ENCODE measurements at regions of chr16 and their contacts with region 1.

Region 1: GRCh38 chr16:22077700-22078313 is 14.5 kb upstream of the VWA3A start:
- DNase-seq: peak; percentile 46 to 74 (median 62)
- H3K4me3 ChIP-seq: no peak overlapping the region
- H3K4me3 Mint-ChIP-seq: no peak overlapping the region
- H3K27ac ChIP-seq: no peak overlapping the region
- H3K27ac Mint-ChIP-seq: peak overlapping the region in 2 of 8 donors; percentile 50 to 63
- H3K4me1 ChIP-seq: no peaks in the 10 kb centered on the region
- H3K4me1 Mint-ChIP-seq: peaks cover 3 to 6% (median 5%) of the 10 kb centered on the region in 3 donors
- H3K27me3 ChIP-seq: no peaks in the 10 kb centered on the region
- H3K27me3 Mint-ChIP-seq: no peaks in the 10 kb centered on the region

Region 2: DNA sequence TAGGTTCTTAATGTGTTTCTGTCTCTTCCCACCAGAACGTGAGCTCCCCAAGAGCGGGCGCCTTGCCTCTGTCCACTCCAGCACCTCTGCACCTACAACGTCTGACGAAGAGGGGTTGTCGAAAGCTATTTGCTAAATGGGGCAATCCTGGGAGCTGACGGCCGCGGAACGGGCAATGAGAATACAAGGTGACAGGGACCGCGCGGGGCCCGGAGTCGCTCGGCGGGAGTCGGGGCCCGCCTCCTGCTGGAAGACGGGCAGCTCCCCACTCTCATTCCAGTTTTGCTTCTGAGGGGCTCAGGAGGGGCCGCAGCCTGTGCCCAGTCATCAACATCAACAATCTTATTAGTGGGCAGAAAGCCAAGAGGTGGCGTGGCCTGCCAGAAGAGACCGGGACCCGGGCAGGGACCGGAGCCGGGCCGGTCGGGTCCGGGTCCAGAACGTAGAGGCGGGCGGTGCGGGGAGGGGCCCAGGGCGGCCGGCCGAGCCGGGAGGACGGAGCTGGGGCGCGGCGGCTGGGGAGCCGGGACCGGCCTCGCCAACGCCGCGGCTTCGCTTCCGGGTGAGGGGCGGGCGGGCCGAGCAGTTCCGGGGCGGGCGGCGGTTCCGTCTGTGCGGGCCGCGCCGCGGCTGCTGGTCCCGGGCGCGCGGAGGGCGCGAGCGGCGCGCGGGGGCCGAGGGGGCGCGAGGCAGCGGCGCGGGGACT is 70.1 kb before region 1 on chr16 and contains the start of gene MOSMO:
- CTCF ChIA-PET with region 1: interaction called, 57 read pairs
- POLR2A ChIA-PET with region 1: interaction called, 3 read pairs
- DNase-seq: peak; percentile 59 to 71 (median 63)
- H3K4me3 ChIP-seq: peak within 1 kb of the TSS; percentile 36
- H3K4me3 Mint-ChIP-seq: peak within 1 kb of the TSS; percentile 85 to 96 (median 88)
- H3K27ac ChIP-seq: peak within 1 kb of the TSS; percentile 49
- H3K27ac Mint-ChIP-seq: peak within 1 kb of the TSS; percentile 62 to 96 (median 88)
- H3K4me1 ChIP-seq: peaks cover 15% of the 10 kb centered on the region
- H3K4me1 Mint-ChIP-seq: peaks cover 42 to 54% (median 54%) of the 10 kb centered on the region in 3 donors
- H3K27me3 ChIP-seq: no peaks in the 10 kb centered on the region
- H3K27me3 Mint-ChIP-seq: no peaks in the 10 kb centered on the region
- total RNA-seq, gene MOSMO: 9.2 to 11.4 TPM

Region 3: GRCh38 chr16:22063888-22064467 is 13.8 kb before region 1 on chr16:
- CTCF ChIA-PET with region 1: interaction called, 13 read pairs
- POLR2A ChIA-PET with region 1: no interaction called
- DNase-seq: no peak
- H3K4me3 ChIP-seq: no peak overlapping the region
- H3K4me3 Mint-ChIP-seq: no peak overlapping the region
- H3K27ac ChIP-seq: no peak overlapping the region
- H3K27ac Mint-ChIP-seq: peak overlapping the region in 2 of 8 donors; percentile 17 to 23
- H3K4me1 ChIP-seq: no peaks in the 10 kb centered on the region
- H3K4me1 Mint-ChIP-seq: peaks cover 4 to 19% (median 5%) of the 10 kb centered on the region in 3 donors
- H3K27me3 ChIP-seq: no peaks in the 10 kb centered on the region
- H3K27me3 Mint-ChIP-seq: no peaks in the 10 kb centered on the region

Region 4: DNA sequence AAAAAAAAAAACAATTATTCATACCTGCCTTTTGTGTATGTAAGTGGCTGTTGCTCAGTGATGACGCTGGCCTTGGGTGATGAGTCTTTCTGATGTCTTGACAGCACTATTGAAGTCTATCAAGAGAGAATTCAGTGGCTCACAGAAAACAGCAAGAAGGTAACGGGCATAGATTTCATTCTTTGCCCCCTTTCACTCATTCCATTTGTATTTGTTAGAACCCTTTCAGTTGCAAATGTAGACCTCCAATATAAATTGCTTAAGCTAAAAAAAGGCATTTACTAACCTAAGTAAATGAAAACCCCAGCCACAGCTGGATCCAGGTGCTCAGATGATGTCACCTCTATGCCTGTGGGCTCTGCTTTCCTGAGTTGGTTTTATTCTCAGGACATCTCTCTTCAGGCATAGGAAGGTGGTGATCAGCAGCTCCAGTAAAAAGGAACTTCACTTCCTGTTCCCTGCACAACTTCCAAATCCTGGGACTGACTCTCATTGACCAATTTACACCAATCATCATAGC is 25.6 kb after region 1 on chr16:
- CTCF ChIA-PET with region 1: interaction called, 13 read pairs
- POLR2A ChIA-PET with region 1: no interaction called
- DNase-seq: no peak
- H3K4me3 ChIP-seq: no peak overlapping the region
- H3K4me3 Mint-ChIP-seq: no peak overlapping the region
- H3K27ac ChIP-seq: no peak overlapping the region
- H3K27ac Mint-ChIP-seq: no peak overlapping the region
- H3K4me1 ChIP-seq: no peaks in the 10 kb centered on the region
- H3K4me1 Mint-ChIP-seq: peaks cover 5 to 11% (median 8%) of the 10 kb centered on the region in 3 donors
- H3K27me3 ChIP-seq: no peaks in the 10 kb centered on the region
- H3K27me3 Mint-ChIP-seq: peaks cover 2 to 3% of the 10 kb centered on the region in 2 donors